Gastrocnemius medialis (tissue), 4 donors: ENCODE measurements at regions of chr7 and their contacts with region 1.

Region 1: DNA sequence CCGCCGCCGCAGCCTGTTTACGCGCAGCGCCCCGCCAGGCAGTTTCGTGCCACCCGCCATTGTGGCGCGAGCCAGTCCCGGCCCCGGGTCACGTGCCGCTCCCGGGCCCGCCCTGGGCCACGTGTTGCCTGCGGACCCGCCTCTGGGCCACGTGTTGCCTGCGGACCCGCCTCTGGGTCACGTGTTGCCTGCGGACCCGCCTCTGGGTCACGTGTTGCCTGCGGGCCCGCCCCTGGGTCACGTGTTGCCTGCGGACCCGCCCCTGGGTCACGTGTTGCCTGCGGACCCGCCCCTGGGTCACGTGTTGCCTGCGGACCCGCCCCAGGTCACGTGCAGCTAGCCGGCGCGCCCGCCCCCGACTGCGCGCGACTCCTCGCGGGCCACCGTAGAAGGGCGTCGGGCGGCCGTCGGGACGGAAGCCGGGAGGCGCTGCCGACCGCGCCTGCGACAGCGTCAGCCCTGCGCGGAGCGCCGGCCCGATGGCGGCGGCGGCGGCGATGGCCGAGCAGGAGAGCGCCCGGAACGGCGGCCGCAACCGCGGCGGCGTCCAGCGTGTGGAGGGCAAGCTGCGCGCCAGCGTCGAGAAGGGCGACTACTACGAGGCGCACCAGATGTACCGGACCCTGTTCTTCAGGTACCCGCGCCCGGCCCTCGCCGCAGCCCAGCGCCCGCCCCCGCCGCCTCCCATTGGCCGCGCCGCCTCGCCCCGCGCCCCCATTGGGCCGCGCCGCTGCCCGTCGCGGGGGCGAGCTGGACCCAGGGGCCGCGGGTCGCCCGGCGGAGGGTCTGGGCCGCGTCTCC is at the start of gene GET4:
- DNase-seq: peak; percentile 96 to 98
- ATAC-seq: peak; percentile 67
- H3K4me3 ChIP-seq: peak within 1 kb of the TSS; percentile 80 to 91 (median 86)
- H3K27ac ChIP-seq: peak within 1 kb of the TSS; percentile 94 to 97 (median 96)
- H3K4me1 ChIP-seq: peaks cover 61 to 62% of the 10 kb centered on the region in 2 donors
- H3K27me3 ChIP-seq: no peaks in the 10 kb centered on the region
- CTCF ChIP-seq: peak in 2 of 5 experiments; percentile 63 to 69
- POLR2A ChIP-seq: peak; percentile 93 to 97
- total RNA-seq, gene GET4: 24.6 to 40.8 (median 30.0) TPM

Region 2: GRCh38 chr7:322111-322671 is 554.2 kb before region 1 on chr7:
- in situ Hi-C with region 1: no loop called
- intact Hi-C with region 1: loop called (anchors 10 kb)
- DNase-seq: peak in 1 of 2 donors; percentile 48
- ATAC-seq: peak; percentile 49 to 78
- H3K4me3 ChIP-seq: no peak overlapping the region
- H3K27ac ChIP-seq: no peak overlapping the region
- H3K4me1 ChIP-seq: peaks cover 4 to 12% of the 10 kb centered on the region in 2 donors
- H3K27me3 ChIP-seq: peaks cover 0 to 2% (median 0%) of the 10 kb centered on the region in 3 donors
- CTCF ChIP-seq: peak; percentile 79 to 98 (median 92)
- POLR2A ChIP-seq: no peak

Region 3: GRCh38 chr7:786472-787255 is 89.7 kb before region 1 on chr7:
- in situ Hi-C with region 1: loop called in 3 of 4 experiments (anchors 5 to 10 kb)
- intact Hi-C with region 1: loop called (anchors 1 kb)
- DNase-seq: peak; percentile 40 to 73
- ATAC-seq: peak; percentile 66 to 86
- H3K4me3 ChIP-seq: no peak overlapping the region
- H3K27ac ChIP-seq: no peak overlapping the region
- H3K4me1 ChIP-seq: peaks cover 5 to 10% of the 10 kb centered on the region in 2 donors
- H3K27me3 ChIP-seq: no peaks in the 10 kb centered on the region
- CTCF ChIP-seq: peak; percentile 86 to 94 (median 91)
- POLR2A ChIP-seq: no peak

Region 4: DNA sequence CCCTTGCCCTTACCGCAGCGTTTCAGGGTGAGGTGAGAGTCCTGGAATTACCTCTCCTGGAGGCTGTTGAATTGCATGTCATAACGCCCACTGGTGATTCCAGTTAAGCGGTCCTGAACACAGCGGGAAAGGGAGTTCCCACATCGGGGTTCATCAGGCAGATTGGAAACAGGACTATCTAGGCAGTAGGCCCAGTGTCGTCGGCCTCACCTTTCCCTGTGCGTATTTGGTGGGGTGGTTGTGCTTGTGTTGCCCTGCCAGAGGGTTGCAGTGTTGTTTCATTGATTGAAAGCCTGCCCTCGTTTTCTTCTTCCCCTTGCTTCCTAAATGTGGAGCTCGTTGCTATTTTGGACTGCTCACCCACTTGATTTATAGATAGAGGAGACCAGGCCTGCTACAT is 54.7 kb before region 1 on chr7:
- in situ Hi-C with region 1: loop called in 2 of 4 experiments (anchors 10 kb)
- intact Hi-C with region 1: loop called (anchors 2 kb)
- DNase-seq: peak in 1 of 2 donors; percentile 47
- ATAC-seq: peak; percentile 37 to 53
- H3K4me3 ChIP-seq: no peak overlapping the region
- H3K27ac ChIP-seq: peak overlapping the region; percentile 91 to 96 (median 94)
- H3K4me1 ChIP-seq: peaks cover 83 to 90% of the 10 kb centered on the region in 2 donors
- H3K27me3 ChIP-seq: no peaks in the 10 kb centered on the region
- CTCF ChIP-seq: peak in 2 of 5 experiments; percentile 23 to 44
- POLR2A ChIP-seq: no peak

Region 5: GRCh38 chr7:1028031-1028770 is 151.8 kb after region 1 on chr7:
- in situ Hi-C with region 1: no loop called
- intact Hi-C with region 1: loop called (anchors 5 kb)
- DNase-seq: peak; percentile 76 to 85
- ATAC-seq: peak; percentile 81 to 88
- H3K4me3 ChIP-seq: peak overlapping the region; percentile 62 to 91 (median 74)
- H3K27ac ChIP-seq: peak overlapping the region; percentile 93 to 98 (median 97)
- H3K4me1 ChIP-seq: peaks cover 21 to 29% of the 10 kb centered on the region in 2 donors
- H3K27me3 ChIP-seq: no peaks in the 10 kb centered on the region
- CTCF ChIP-seq: no peak
- POLR2A ChIP-seq: peak; percentile 63 to 69